ENCODE measurements at regions of chr11 and their contacts with region 1.

Region 1: DNA sequence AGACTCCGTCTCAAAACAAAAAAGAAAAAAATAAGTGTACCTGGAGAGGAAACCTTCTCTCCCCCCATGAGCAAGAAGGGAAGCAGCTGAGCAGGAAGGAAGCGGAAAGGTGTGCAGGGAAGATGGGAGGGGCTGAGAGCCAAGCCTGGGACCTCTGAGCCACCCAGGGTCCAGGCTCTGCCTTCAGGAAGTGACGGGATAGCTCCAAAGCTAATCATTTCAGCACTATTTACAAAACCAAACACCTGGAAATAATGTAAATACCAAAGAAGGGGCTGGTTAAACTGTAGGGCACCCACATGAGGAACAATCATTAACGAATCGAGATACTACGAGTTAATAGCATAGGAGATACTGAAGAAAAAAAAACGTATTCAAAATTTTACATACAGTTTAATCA is 27.9 kb downstream of the ARRB1 start:
- DNase-seq: no peak
- H3K4me3 ChIP-seq: no peak overlapping the region
- H3K27ac ChIP-seq: peak overlapping the region in 1 of 4 donors; percentile 32
- H3K4me1 ChIP-seq: peaks cover 29 to 99% (median 94%) of the 10 kb centered on the region in 4 donors
- H3K27me3 ChIP-seq: no peaks in the 10 kb centered on the region
- CTCF ChIP-seq: no peak
- EP300 ChIP-seq: no peak
- POLR2A ChIP-seq: no peak

Region 2: GRCh38 chr11:75031771-75032549 is 291.6 kb before region 1 on chr11:
- intact Hi-C with region 1: no loop called
- DNase-seq: peak; percentile 92
- H3K4me3 ChIP-seq: no peak overlapping the region
- H3K27ac ChIP-seq: no peak overlapping the region
- H3K4me1 ChIP-seq: no peaks in the 10 kb centered on the region
- H3K27me3 ChIP-seq: no peaks in the 10 kb centered on the region
- CTCF ChIP-seq: peak; percentile 56 to 70 (median 60)
- EP300 ChIP-seq: no peak
- POLR2A ChIP-seq: no peak

Region 3: DNA sequence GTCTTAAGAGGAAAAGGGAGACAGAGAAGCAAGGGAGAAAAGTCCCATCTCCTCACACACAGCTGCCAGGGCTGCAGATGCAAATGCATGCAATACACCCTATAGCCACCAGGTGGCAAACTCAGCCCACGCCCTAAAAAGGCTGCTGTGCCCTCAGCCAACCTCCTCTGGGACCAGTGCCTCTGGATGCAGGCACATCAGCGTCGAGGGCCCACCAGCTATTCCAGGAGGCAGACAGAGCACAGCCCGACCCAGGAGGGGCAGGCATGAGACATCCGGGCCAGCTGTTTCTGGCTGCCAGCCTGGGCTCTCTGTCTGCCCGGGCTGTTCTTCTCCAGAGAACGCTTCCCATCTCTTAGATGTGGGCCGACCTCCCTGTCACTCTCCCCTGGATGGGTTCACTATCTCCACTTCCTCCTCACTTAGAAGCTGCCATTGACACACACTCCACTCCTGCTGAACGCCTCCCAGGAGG is 43.3 kb before region 1 on chr11:
- intact Hi-C with region 1: loop called (anchors 5 kb)
- DNase-seq: peak; percentile 96
- H3K4me3 ChIP-seq: no peak overlapping the region
- H3K27ac ChIP-seq: peak overlapping the region; percentile 32 to 69 (median 46)
- H3K4me1 ChIP-seq: peaks cover 6 to 21% (median 16%) of the 10 kb centered on the region in 4 donors
- H3K27me3 ChIP-seq: no peaks in the 10 kb centered on the region
- CTCF ChIP-seq: peak in 2 of 3 experiments; percentile 97 to 98
- EP300 ChIP-seq: no peak
- POLR2A ChIP-seq: no peak

Region 4: GRCh38 chr11:75350743-75351540 is 27.3 kb after region 1 on chr11:
- intact Hi-C with region 1: no loop called
- DNase-seq: no peak
- H3K4me3 ChIP-seq: peak overlapping the region; percentile 88 to 98 (median 92)
- H3K27ac ChIP-seq: peak overlapping the region; percentile 95 to 98 (median 97)
- H3K4me1 ChIP-seq: peaks cover 55 to 69% (median 66%) of the 10 kb centered on the region in 4 donors
- H3K27me3 ChIP-seq: no peaks in the 10 kb centered on the region
- CTCF ChIP-seq: peak in 1 of 3 experiments; percentile 21
- EP300 ChIP-seq: no peak
- POLR2A ChIP-seq: no peak

Region 5: DNA sequence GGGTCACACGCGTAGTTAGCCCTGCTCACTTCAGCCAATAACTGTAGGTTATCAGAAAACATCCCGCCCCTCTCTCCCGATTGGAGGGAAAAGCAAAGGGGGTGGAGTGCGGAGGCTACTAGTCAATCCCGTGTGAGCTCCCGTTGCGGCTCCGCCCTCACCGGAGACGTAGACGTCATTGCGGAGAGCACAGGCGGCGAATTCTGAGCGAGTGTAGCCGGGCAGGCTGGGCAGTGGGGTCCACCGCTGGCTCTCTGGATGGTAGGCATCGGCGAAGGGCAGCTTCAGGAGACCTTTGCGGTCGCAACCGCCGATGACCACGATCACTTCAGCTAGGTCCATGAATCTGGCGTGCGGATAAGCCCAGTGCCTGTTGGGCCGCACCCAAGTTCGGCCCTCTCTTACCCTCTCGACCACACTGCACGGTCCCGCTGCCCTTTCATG is 104.7 kb after region 1 on chr11:
- intact Hi-C with region 1: no loop called
- DNase-seq: peak; percentile 97
- H3K4me3 ChIP-seq: peak overlapping the region; percentile 42 to 61 (median 55)
- H3K27ac ChIP-seq: peak overlapping the region in 2 of 4 donors; percentile 63 to 64
- H3K4me1 ChIP-seq: peaks cover 10 to 41% (median 30%) of the 10 kb centered on the region in 4 donors
- H3K27me3 ChIP-seq: peaks cover 0 to 51% (median 16%) of the 10 kb centered on the region in 4 donors
- CTCF ChIP-seq: no peak
- EP300 ChIP-seq: no peak
- POLR2A ChIP-seq: no peak